ENCODE measurements at regions of chr12 and their contacts with region 1.

Region 1: GRCh38 chr12:39587225-39587624 is 32.4 kb downstream of the ABCD2 start:
- DNase-seq: no peak
- ATAC-seq: peak; percentile 57 to 64
- H3K4me3 ChIP-seq: no peak overlapping the region
- H3K27ac ChIP-seq: no peak overlapping the region
- H3K4me1 ChIP-seq: no peaks in the 10 kb centered on the region
- H3K27me3 ChIP-seq: no peaks in the 10 kb centered on the region

Region 2: DNA sequence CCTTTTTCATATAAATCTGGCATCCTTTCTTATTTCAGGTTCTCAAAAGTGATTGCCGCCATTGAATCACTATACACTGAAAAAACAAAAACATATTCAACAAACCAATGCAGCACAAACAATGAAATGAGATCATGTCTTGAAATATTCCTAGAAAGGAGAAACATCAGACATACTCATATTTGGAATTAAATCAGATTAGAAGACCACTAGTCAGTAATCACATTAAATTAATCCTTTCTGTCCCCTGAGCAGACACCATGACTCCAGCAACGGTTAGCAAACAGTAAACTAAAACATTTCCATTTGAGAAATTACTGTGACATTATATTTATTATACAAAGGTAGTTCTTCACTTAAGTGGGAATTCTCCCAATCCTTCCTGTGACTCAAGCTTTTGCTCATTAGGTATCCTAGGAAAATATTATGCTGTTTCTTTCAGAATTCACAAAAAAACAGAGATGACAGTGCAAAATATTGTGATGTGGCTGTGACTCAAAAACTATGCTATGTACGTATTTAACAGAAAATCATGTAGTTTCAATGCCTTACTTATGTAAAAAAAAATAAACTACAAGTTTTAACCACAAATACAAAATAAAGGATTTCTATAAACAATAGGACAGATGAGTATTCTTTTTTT is 711.5 kb before region 1 on chr12:
- intact Hi-C with region 1: no loop called
- DNase-seq: no peak
- ATAC-seq: no peak
- H3K4me3 ChIP-seq: no peak overlapping the region
- H3K27ac ChIP-seq: no peak overlapping the region
- H3K4me1 ChIP-seq: no peaks in the 10 kb centered on the region
- H3K27me3 ChIP-seq: no peaks in the 10 kb centered on the region

Region 3: DNA sequence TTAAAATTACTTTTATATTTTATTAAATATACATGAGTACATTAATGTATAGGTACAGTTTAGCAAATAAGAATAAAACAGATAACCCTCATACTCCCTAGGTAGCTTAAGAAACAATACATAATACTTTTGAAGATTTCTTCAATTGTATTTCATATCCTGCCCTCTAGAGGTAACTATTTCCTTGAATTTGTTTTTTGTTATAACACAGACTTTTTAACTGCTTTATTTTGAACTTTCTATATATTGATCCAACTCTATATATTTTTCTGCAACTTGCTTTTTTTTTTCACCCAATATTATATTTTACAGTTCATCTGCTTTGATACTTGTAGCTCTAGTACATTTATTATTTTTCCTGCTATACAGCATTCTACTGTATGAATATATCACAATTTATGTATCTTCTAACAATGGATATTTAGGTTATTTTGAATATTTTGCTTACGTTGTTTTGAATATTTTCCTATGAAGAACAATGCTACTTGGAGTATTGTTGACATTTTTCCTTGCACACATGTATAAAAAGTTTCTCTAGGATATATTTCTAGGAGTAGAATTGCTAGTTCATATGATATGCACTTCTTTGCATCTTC is 105.1 kb after region 1 on chr12:
- intact Hi-C with region 1: loop called in 1 of 4 experiments (anchors 10 kb)
- DNase-seq: no peak
- ATAC-seq: no peak
- H3K4me3 ChIP-seq: no peak overlapping the region
- H3K27ac ChIP-seq: no peak overlapping the region
- H3K4me1 ChIP-seq: no peaks in the 10 kb centered on the region
- H3K27me3 ChIP-seq: no peaks in the 10 kb centered on the region